Activated CD8-positive, alpha-beta T cell treated with anti-CD3 and anti-CD28 coated beads, Interleukin-2, amount 10 ng/mL, durations not matched to agents 7 days and 5 days (primary cell): ENCODE measurements at regions of chr7 and their contacts with region 1.

Region 1: DNA sequence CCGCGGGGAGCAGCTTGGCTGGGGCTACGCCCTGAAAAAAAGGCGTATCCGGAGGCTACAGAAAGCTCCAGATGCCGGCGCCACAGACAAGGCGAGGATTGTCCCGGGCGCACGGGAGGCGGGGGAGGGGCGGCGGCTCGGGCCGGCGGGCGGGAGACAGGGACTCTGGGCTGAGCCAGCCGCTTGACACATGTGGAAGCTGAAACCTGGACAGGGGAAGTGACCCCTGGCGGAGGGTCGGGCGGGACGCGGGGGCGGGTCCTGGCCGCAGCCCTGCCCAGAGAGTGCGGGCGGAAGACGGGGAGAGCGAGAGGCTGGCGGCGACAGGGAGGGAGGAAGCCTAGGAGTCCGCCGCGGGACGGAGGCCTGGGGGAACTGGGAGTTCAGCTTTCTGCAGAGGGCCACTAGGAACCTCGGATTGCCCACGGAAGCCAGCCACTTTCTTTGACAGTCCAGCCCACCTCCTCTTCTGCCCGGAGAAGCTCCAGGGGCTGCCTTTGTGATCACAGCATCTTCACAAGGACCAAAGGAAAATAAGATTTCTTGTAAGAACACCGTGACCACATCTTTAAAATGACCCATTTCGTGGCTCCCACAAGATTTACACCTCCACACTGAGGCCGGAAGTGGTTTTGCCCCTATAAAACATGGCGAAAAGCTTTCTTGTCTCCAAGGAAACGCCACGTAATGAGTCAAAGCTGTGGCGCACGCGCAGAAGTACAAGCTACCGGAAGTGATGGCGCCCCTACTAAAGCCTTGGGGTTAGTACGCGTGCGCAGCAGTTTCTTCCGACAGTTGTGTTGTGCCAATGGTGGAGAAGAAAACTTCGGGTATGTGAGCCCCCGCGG is at the starts of genes PLOD3 and ZNHIT1:
- DNase-seq: peak; percentile 99
- ATAC-seq: peak; percentile 71
- H3K4me3 Mint-ChIP-seq: peak within 1 kb of the TSS; percentile 96
- H3K27ac Mint-ChIP-seq: peak within 1 kb of the TSS; percentile 88
- H3K4me1 Mint-ChIP-seq: peaks cover 36% of the 10 kb centered on the region
- H3K27me3 Mint-ChIP-seq: no peaks in the 10 kb centered on the region
- total RNA-seq, gene PLOD3: 51.1 to 58.1 TPM
- total RNA-seq, gene ZNHIT1: 56.1 to 58.4 TPM

Region 2: DNA sequence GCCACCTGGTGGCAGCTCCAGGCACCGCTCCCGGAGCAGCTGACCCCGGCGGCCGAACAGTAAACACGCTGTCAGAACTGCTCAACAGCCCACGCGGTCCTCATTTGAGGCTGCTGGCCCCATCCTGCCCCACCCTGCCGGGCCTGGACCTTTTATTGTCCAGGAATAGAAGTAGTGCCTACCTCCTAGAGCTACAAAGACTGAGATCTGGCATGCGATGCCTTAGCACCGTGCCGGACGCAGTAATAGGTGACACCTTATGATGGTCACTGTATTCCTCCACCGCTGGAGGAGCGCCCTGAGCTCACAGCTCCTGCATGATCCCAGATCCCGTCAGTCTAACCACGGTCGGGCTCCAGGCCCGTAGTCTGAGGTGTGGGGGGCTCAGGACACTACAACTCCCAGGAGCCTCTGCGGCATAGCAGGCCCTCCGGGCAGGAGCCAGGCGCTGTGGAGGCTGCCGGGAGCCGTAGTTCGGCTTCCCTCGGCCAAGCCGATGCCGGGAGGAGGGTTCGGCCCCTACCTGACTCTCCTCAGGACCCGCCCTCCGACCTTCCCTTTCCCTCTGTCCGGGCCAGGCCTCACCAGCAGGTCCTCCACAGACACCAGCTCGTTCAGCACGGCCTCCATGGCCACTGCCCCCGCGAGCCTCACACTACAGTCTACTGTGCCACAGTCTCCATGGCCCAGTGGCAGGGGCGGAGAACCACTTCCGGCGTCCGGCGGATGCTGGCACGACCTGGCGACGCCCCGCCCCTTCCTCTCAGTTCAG is 26.9 kb after region 1 on chr7 and contains the start of gene FIS1:
- CTCF ChIA-PET with region 1: interaction called, 64 read pairs
- POLR2A ChIA-PET with region 1: interaction called, 20 read pairs
- DNase-seq: peak; percentile 95
- ATAC-seq: peak; percentile 96
- H3K4me3 Mint-ChIP-seq: peak within 1 kb of the TSS; percentile 93
- H3K27ac Mint-ChIP-seq: peak within 1 kb of the TSS; percentile 97
- H3K4me1 Mint-ChIP-seq: peaks cover 33% of the 10 kb centered on the region
- H3K27me3 Mint-ChIP-seq: no peaks in the 10 kb centered on the region
- total RNA-seq, gene FIS1: 103 to 108 TPM

Region 3: DNA sequence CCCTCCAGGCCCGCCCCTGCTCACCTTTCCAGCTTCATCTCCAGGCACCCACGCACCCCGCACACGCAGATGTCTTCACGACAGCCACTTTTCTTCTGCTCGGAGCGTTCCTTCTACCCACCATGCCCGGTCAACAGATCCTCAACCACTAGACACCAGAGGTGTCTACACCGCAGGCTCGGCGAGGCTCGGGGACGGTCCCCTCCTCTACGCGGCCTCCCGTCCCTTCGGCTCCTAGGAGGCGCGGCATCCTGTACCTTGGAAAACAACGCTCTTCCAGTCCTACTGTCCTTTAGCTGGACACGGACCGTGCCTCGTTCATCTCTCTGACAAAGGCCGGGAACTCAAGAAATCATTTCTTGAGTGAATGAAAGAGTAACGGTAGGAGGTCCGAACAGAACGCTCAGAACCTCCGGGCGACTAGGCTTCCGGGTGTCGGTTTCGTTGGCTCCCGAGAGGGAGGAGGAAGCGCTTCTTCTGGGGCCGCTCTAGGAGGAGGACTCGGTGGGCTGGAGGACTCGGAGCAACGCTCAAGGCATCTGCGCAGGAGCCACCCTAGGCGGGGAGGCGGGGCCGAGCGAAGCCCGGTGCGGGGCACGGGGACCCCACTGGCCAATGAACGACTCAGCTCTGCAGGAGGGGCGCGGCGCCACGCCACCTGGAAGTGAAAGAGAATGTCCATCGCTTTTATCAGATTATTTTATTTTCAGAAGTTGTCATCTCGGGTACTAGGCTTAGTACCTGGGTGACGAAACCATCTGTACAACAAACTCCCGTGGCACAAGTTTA is 34.5 kb after region 1 on chr7:
- CTCF ChIA-PET with region 1: interaction called, 12 read pairs
- POLR2A ChIA-PET with region 1: interaction called, 16 read pairs
- DNase-seq: peak; percentile 99
- ATAC-seq: peak; percentile 100
- H3K4me3 Mint-ChIP-seq: peak overlapping the region; percentile 100
- H3K27ac Mint-ChIP-seq: peak overlapping the region; percentile 98
- H3K4me1 Mint-ChIP-seq: peaks cover 31% of the 10 kb centered on the region
- H3K27me3 Mint-ChIP-seq: no peaks in the 10 kb centered on the region